ENCODE measurements at regions of chr2 and their contacts with region 1.

Region 1: DNA sequence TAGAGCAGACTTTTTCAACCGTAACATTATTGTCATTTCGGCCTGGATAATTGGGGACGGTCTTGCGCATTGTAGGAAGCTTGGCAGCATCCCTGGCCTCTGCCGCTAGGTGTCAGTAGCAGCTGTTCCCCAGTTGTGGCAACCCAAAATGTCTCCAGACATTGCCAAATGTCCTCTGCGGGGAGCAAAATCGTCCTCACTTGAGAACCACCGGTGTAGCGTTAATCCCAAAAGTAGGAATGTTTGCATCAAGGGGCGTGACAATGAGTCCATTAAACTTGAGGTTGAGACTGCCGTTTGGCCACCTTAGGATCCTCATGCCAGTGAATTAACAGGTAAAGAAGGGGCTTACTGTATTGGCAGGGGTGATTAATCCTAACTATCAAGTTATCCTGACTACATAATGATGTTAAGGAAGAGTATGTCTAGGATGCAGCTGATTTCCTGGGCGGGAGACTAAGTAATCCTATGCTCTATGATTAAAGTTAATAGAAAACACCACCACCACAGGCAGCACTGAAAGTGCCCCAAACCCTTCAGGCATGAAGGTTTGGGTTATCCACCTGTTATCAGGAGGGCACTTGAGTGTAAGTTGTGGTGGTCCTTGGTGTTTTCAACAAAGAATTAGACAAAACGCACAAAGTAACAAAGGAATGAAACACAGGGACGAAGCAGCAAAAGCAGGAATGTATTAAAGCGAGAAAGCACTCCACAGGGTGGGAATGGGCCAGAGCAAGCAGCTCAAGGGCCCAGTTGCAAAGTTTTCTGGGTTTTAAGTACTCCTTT is 4.9 kb upstream of the ZC3H8 start:
- DNase-seq: peak; percentile 87
- ATAC-seq: peak; percentile 40
- H3K4me3 ChIP-seq: peak overlapping the region in 3 of 5 experiments; percentile 8 to 29 (median 12)
- H3K4me3 Mint-ChIP-seq: peak overlapping the region; percentile 70
- H3K27ac ChIP-seq: no peak overlapping the region
- H3K27ac Mint-ChIP-seq: peak overlapping the region; percentile 67
- H3K4me1 ChIP-seq: peaks cover 5 to 13% of the 10 kb centered on the region in 2 donors
- H3K4me1 Mint-ChIP-seq: peaks cover 11% of the 10 kb centered on the region
- H3K27me3 ChIP-seq: no peaks in the 10 kb centered on the region
- H3K27me3 Mint-ChIP-seq: no peaks in the 10 kb centered on the region
- CTCF ChIP-seq: peak; percentile 97

Region 2: DNA sequence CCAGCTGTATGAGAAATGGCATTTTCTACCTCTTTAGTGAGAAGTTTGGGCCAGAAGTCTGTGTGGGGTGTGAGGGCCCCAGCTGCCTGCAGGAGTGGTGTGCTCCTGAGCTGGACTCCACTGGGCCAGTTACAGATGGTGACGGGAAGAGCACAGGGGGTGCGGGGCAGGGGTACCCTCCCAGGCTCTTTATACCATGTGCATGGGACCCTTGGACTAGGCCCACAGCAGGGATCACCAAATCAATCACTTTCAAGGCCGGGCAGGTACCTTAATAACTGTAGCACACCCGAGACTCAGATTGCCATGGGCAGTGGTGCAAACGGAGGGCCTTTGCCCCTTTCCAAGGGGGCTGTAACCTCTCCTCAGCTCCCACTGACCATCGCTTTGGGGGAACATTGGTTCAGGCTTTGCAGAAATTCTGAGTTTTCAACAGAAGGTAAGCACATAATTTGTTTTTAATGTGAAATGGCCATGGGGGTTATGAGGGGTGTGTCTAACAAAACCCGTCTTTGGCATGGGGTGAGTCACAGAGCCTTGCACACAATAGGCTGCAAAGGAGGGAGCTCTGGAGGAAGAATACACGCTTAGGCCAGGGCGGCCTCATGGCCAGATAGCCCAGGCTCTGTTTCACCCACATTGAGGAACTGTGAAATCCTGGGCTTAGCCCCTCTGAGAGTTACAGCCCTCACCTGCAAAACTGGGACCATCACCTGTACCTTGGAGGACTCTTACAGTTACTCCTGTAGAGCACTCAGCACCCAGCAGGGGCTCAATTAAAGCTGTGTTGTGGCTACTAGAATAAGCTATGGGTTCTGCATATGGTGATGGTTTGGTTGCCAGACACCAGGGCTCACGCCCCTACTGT is 1280.0 kb before region 1 on chr2:
- CTCF ChIA-PET with region 1: no interaction called
- POLR2A ChIA-PET with region 1: no interaction called
- intact Hi-C with region 1: no loop called
- DNase-seq: no peak
- ATAC-seq: no peak
- H3K4me3 ChIP-seq: no peak overlapping the region
- H3K4me3 Mint-ChIP-seq: no peak overlapping the region
- H3K27ac ChIP-seq: no peak overlapping the region
- H3K27ac Mint-ChIP-seq: no peak overlapping the region
- H3K4me1 ChIP-seq: no peaks in the 10 kb centered on the region
- H3K4me1 Mint-ChIP-seq: no peaks in the 10 kb centered on the region
- H3K27me3 ChIP-seq: no peaks in the 10 kb centered on the region
- H3K27me3 Mint-ChIP-seq: peaks cover 6% of the 10 kb centered on the region
- CTCF ChIP-seq: no peak

Region 3: DNA sequence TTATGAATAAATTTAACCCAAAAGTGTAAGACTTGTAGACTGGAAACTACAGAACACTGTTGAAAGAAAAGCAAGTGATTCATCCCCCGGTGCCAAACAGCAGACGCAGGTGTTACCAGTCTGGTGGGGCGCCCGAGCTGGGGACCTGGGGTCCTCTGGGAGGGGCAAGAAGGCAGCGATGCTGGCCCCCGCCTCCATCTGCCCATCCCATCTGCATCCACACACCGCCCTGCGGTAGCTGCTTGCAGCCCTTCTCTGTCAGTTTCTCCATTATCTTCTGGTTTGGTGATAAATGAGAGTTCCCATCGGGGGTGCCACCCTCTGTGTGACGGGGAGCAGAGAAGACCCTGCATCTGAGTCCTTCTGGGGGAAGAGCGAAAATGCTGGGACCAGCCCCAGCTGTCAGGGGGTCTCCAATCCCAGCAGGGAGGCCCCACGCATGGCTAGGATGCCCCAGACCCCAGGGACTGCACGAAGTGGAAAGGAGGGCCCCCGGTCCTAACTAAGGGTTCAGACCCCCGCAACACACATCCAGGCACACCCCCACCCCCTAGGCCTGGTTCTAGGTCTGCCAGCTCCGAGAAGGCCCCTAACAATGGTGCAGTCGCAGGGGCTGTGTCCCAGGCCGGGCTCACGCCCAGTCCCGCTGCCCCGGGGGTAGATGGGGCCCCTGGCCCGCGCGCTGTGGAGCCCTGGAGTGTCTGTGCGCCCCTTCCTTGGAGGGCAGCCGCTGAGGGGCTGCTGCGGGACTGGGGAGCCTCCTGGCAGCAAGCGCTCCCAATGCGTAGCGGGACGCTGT is 174.4 kb after region 1 on chr2:
- CTCF ChIA-PET with region 1: interaction called, 5 read pairs
- POLR2A ChIA-PET with region 1: no interaction called
- intact Hi-C with region 1: loop called (anchors 2 kb)
- DNase-seq: no peak
- ATAC-seq: no peak
- H3K4me3 ChIP-seq: no peak overlapping the region
- H3K4me3 Mint-ChIP-seq: no peak overlapping the region
- H3K27ac ChIP-seq: no peak overlapping the region
- H3K27ac Mint-ChIP-seq: no peak overlapping the region
- H3K4me1 ChIP-seq: no peaks in the 10 kb centered on the region
- H3K4me1 Mint-ChIP-seq: peaks cover 16% of the 10 kb centered on the region
- H3K27me3 ChIP-seq: peaks cover 0 to 3% (median 0%) of the 10 kb centered on the region in 4 experiments
- H3K27me3 Mint-ChIP-seq: peaks cover 13% of the 10 kb centered on the region
- CTCF ChIP-seq: no peak

Region 4: GRCh38 chr2:112529757-112530156 is 270.1 kb after region 1 on chr2:
- CTCF ChIA-PET with region 1: no interaction called
- POLR2A ChIA-PET with region 1: no interaction called
- intact Hi-C with region 1: no loop called
- DNase-seq: no peak
- ATAC-seq: no peak
- H3K4me3 ChIP-seq: no peak overlapping the region
- H3K4me3 Mint-ChIP-seq: no peak overlapping the region
- H3K27ac ChIP-seq: no peak overlapping the region
- H3K27ac Mint-ChIP-seq: no peak overlapping the region
- H3K4me1 ChIP-seq: no peaks in the 10 kb centered on the region
- H3K4me1 Mint-ChIP-seq: no peaks in the 10 kb centered on the region
- H3K27me3 ChIP-seq: no peaks in the 10 kb centered on the region
- H3K27me3 Mint-ChIP-seq: no peaks in the 10 kb centered on the region
- CTCF ChIP-seq: no peak